Activated naive CD4-positive, alpha-beta T cell treated with anti-CD3 and anti-CD28 coated beads for 36 hours (primary cell): ENCODE measurements at regions of chr5 and their contacts with region 1.

Region 1: GRCh38 chr5:35926389-35927051 is 11.9 kb downstream of the CAPSL start:
- DNase-seq: peak; percentile 83
- H3K4me3 Mint-ChIP-seq: peak overlapping the region; percentile 16
- H3K27ac Mint-ChIP-seq: no peak overlapping the region
- H3K4me1 Mint-ChIP-seq: peaks cover 46% of the 10 kb centered on the region
- H3K27me3 Mint-ChIP-seq: peaks cover 1% of the 10 kb centered on the region

Region 2: DNA sequence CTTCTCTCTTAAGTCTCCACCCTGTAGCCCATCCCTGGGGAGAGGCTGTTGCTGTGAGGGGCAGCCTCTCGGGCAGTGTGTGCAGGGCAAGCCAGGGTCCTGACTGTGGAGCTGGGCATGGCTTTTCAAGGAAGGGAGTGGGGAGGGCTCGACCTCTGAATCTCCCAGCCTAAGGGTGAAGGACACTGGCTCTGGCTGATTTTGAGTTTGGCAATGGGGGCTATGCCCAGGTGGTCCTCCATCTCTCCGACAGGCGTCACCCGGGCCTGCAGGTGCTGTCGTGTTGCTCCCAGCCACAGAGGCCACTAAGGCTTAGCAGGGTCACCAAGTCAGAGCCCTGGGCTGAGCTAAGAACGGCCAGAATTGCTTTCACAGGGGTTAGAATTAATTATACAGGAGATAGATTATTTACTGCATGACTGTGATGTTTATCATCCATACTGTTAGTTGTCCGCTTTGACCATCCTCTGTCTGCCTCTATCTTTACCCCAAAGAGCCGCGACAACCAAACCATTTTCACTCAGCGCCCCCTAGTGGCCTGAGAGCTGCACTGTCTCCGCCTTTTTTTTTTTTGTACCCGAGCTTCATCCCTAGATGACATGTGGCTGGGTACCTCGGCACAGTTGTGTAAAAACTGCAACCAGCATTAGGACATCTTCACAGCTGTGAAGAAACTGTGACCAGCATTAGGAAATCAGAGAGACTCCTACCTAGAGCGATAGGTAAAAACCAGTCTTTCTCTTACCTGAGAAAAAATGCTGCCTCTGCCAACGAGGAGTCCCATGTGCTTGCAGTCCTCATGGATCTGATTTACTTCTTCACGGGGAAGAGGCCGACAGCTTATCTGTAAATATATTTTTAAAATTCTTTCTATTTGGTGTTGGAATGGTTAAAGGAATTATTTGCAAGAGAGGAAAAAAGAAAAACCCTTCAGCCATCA is 923.2 kb before region 1 on chr5:
- CTCF ChIA-PET with region 1: no interaction called
- intact Hi-C with region 1: loop called (anchors 2 kb)
- DNase-seq: peak; percentile 76
- H3K4me3 Mint-ChIP-seq: no peak overlapping the region
- H3K27ac Mint-ChIP-seq: no peak overlapping the region
- H3K4me1 Mint-ChIP-seq: no peaks in the 10 kb centered on the region
- H3K27me3 Mint-ChIP-seq: peaks cover 16% of the 10 kb centered on the region

Region 3: GRCh38 chr5:35319333-35320002 is 607.1 kb before region 1 on chr5:
- CTCF ChIA-PET with region 1: no interaction called
- intact Hi-C with region 1: loop called (anchors 2 kb)
- DNase-seq: peak; percentile 94
- H3K4me3 Mint-ChIP-seq: no peak overlapping the region
- H3K27ac Mint-ChIP-seq: peak overlapping the region; percentile 24
- H3K4me1 Mint-ChIP-seq: peaks cover 14% of the 10 kb centered on the region
- H3K27me3 Mint-ChIP-seq: peaks cover 24% of the 10 kb centered on the region

Region 4: GRCh38 chr5:35626108-35626507 is 300.4 kb before region 1 on chr5:
- CTCF ChIA-PET with region 1: interaction called, 30 read pairs
- intact Hi-C with region 1: no loop called
- DNase-seq: no peak
- H3K4me3 Mint-ChIP-seq: no peak overlapping the region
- H3K27ac Mint-ChIP-seq: no peak overlapping the region
- H3K4me1 Mint-ChIP-seq: peaks cover 26% of the 10 kb centered on the region
- H3K27me3 Mint-ChIP-seq: no peaks in the 10 kb centered on the region

Region 5: GRCh38 chr5:35736280-35736679 is 190.2 kb before region 1 on chr5:
- CTCF ChIA-PET with region 1: interaction called, 5 read pairs
- intact Hi-C with region 1: loop called (anchors 1 kb)
- DNase-seq: peak; percentile 83
- H3K4me3 Mint-ChIP-seq: no peak overlapping the region
- H3K27ac Mint-ChIP-seq: peak overlapping the region; percentile 73
- H3K4me1 Mint-ChIP-seq: peaks cover 58% of the 10 kb centered on the region
- H3K27me3 Mint-ChIP-seq: no peaks in the 10 kb centered on the region

Region 6: GRCh38 chr5:35838370-35839042 is 88.0 kb before region 1 on chr5:
- CTCF ChIA-PET with region 1: interaction called, 3 read pairs
- intact Hi-C with region 1: loop called (anchors 1 kb)
- DNase-seq: no peak
- H3K4me3 Mint-ChIP-seq: no peak overlapping the region
- H3K27ac Mint-ChIP-seq: peak overlapping the region; percentile 95
- H3K4me1 Mint-ChIP-seq: peaks cover 74% of the 10 kb centered on the region
- H3K27me3 Mint-ChIP-seq: no peaks in the 10 kb centered on the region

Region 7: GRCh38 chr5:35902046-35902676 is 24.4 kb before region 1 on chr5:
- CTCF ChIA-PET with region 1: interaction called, 22 read pairs
- intact Hi-C with region 1: loop called (anchors 1 kb)
- DNase-seq: peak; percentile 58
- H3K4me3 Mint-ChIP-seq: no peak overlapping the region
- H3K27ac Mint-ChIP-seq: peak overlapping the region; percentile 34
- H3K4me1 Mint-ChIP-seq: peaks cover 85% of the 10 kb centered on the region
- H3K27me3 Mint-ChIP-seq: no peaks in the 10 kb centered on the region

Region 8: GRCh38 chr5:35963381-35963843 is 36.9 kb after region 1 on chr5:
- CTCF ChIA-PET with region 1: no interaction called
- intact Hi-C with region 1: no loop called
- DNase-seq: peak; percentile 35
- H3K4me3 Mint-ChIP-seq: no peak overlapping the region
- H3K27ac Mint-ChIP-seq: no peak overlapping the region
- H3K4me1 Mint-ChIP-seq: no peaks in the 10 kb centered on the region
- H3K27me3 Mint-ChIP-seq: peaks cover 15% of the 10 kb centered on the region

Region 9: DNA sequence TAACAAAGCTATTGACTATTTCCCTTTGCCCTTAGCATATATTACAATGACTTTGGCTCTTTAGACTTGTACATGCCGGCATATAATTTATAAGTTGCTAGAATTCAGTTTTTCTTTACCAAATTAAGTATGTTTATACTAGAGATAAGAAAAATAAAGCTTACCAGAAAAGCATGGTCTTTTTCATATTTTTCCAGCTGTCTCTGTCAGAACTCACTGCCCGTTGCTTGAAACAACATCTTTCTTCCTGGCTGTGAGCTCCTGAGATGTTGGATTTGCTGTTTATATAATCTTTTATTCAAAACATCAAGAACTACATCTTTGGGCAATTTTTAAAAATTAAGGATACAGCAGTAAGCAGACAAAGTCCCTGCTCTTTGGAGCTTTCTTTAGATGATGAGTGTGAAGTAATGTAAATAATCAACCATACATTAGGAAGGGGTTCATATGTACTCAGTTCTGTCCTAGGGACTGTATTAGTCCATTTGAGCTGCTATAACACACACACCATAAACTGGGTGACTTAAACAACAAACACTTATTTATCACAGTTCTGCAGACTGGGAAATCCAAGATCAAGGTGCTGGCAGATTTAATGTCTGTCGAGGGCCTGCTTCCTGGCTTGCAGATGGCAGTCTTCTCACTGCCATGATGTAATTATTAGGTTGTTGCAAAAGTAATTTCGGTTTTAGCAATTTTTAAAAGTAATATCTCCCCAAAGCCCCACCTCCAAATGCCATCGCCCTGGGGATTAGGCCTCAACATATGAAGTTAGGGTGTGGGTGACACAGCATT is 420.6 kb after region 1 on chr5:
- CTCF ChIA-PET with region 1: no interaction called
- intact Hi-C with region 1: no loop called
- DNase-seq: no peak
- H3K4me3 Mint-ChIP-seq: no peak overlapping the region
- H3K27ac Mint-ChIP-seq: no peak overlapping the region
- H3K4me1 Mint-ChIP-seq: no peaks in the 10 kb centered on the region
- H3K27me3 Mint-ChIP-seq: peaks cover 6% of the 10 kb centered on the region